Right ventricle myocardium inferior (tissue), 1 donor: ENCODE measurements at regions of chr11 and their contacts with region 1.

Region 1: DNA sequence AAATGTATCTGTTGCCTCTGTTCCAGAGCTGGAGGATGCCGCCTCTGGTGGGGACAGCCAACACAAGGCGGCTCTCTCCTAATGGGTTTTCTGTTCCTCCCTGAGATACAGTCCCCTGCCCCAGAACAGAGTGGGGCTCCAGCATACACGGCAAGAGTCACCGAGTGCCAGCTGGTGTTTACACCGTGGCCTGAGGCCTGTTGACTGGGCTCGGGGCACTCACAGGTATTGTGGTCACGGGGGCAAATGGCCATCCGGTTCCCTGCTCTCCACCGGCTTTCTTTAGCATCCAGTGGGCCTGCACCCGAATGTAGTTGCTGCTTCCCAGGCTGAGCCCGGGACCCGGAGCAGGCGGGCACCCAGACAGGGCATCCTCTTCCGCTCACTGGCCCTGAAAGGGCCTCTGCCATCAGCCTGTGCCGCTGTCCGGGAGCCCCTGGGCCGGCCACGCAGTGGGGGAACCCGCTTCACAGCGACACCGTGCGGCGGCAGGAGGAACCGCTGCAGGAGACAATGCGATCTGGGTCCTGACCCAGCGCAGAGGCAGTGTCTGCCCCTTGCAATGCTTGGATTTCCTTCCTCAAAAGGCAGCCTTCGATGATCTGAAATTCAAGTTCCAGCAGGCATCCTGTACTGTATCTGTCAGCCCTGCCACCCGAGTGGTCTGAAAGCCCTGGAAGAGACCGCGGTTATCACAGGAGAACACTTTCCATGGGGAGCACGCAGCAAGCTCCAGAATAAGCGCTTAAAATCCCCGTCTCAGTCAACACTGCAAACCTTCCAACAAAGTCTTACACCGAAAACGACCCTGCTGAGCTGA is 859 bp upstream of the KRTAP5-5 start:
- DNase-seq: peak; percentile 76
- ATAC-seq: peak; percentile 79

Region 2: DNA sequence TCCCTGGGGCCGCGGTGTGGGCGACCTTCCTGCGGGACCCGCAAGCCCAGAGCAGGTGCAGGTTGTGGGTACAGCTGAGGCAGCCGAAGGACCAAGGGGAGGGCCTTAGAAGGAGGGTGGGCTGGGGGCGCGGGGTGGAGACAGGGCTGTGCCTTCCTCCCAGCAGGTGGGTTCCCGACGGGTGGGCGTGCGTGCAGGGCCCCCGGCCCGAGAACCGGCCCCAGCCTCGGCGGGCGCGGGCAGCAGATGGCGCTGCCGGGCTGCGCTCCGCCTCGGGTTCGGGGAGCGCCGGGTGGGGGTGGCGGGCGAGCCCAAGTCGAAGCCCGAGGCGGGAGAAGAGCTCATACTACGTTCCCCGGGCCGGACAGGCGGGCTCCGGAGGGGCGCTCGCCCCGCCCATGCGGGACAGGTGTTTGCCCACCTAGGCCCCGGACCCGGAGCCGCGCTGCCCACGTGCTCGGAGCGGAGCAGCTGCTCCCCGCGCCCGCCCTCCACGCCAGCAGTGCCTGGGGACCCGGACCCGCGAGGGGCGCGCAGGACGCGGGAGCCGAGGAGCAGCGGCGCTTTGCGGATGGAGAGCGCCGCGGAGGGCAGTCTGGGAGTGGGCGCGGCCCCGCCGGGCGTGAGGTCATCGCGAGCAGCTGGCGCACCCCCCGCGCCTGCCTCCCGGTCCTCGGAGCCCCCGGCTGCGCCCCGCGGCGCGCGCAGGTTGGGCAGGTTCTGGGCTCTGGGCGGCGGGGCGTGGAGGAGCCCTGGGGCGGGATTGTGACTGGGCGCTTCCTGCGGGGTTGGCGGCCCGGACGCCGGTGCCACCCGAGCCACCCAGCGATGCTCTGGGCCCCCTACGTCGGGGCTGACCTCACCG is 81.9 kb before region 1 on chr11:
- intact Hi-C with region 1: loop called (anchors 1 kb)
- DNase-seq: peak; percentile 64
- ATAC-seq: peak; percentile 70

Region 3: GRCh38 chr11:1598816-1599215 is 29.9 kb before region 1 on chr11:
- intact Hi-C with region 1: loop called (anchors 2 kb)
- DNase-seq: no peak
- ATAC-seq: no peak

Region 4: GRCh38 chr11:1763796-1764661 is 135.3 kb after region 1 on chr11 and contains the start of gene CTSD:
- intact Hi-C with region 1: no loop called
- DNase-seq: peak; percentile 96
- ATAC-seq: peak; percentile 85
- total RNA-seq, gene CTSD: 957 TPM